ENCODE measurements at regions of chr15 and their contacts with region 1.

Region 1: DNA sequence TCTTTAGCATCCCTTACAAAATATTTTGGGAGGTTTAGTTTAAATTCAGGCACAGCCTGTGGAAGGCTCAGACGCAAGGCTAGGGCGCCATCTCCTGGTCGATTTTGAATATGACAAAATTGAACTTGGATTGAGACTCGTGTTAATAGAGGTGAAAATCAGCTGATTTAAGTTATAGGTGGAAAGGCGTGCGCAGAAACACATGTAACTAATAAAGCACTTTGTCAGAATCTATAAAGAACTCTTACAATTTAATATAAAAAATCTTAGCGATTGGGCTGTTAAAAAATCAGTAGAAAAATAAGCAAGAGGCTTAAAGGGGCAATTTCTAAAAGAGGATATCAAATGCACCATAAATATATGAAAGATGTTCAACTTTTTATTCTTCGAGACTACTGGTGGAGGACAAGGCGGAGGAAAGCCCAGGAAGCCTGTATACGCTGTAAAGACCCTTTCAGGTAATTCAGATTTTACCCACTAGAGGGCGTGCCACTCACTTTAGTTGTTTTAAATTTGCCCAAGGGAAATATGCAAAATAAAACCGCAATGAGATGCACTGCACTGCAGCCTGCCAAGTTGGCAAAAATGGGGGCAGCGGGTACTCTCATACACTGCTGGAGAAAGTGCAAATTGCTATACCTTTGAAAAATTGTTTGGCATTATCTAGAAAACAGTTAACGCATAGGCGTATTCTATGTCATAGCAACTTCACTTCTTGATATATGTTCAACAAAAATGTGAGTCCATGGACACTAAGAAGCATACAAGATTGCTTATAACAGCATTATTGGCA is 64.7 kb downstream of the SLC30A4 start:
- DNase-seq: peak; percentile 90
- H3K4me3 Mint-ChIP-seq: peak overlapping the region; percentile 79
- H3K27ac Mint-ChIP-seq: peak overlapping the region; percentile 79
- H3K4me1 Mint-ChIP-seq: peaks cover 42% of the 10 kb centered on the region
- H3K27me3 Mint-ChIP-seq: no peaks in the 10 kb centered on the region

Region 2: GRCh38 chr15:44873103-44873502 is 584.7 kb before region 1 on chr15:
- CTCF ChIA-PET with region 1: no interaction called
- intact Hi-C with region 1: no loop called
- DNase-seq: no peak
- H3K4me3 Mint-ChIP-seq: no peak overlapping the region
- H3K27ac Mint-ChIP-seq: no peak overlapping the region
- H3K4me1 Mint-ChIP-seq: no peaks in the 10 kb centered on the region
- H3K27me3 Mint-ChIP-seq: peaks cover 9% of the 10 kb centered on the region

Region 3: DNA sequence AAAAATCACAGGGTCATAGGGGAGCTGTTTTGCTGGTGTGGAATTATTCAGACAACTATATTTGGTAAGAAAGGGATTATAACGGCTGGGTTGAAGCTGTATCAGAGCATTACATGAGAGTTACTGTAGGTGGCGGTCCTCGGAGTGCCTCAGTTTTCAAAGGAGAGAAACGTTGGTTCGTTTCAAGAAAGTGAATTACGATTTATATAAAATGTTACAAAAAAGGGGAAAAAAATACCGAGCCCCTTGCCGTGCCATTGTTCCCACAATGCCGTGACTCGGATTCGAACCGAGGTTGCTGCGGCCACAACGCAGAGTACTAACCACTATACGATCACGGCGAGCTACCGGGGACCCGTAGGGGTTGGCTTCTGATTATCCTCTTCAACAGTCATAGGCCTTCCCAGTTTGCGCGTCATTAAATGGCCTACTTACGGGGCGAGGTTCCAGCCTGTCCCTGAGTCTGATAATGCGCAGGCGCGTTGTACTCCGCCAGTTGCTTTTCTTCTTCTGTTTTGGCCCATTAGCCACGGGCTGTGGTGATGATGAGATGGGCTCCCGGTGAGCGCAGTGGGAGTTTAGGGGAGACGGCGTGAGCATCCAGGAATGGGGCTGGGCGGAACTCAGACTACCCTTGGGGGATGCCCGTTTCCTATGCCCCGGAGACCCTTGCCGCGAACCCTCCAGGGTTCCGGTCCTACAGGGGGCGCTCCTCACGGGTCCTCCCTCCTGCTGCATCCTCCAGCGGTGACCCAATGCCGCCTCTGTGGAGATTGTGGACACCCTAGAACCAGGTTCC is 259.3 kb before region 1 on chr15:
- CTCF ChIA-PET with region 1: interaction called, 4 read pairs
- intact Hi-C with region 1: loop called (anchors 1 kb)
- DNase-seq: peak; percentile 97
- H3K4me3 Mint-ChIP-seq: no peak overlapping the region
- H3K27ac Mint-ChIP-seq: no peak overlapping the region
- H3K4me1 Mint-ChIP-seq: peaks cover 5% of the 10 kb centered on the region
- H3K27me3 Mint-ChIP-seq: peaks cover 2% of the 10 kb centered on the region

Region 4: DNA sequence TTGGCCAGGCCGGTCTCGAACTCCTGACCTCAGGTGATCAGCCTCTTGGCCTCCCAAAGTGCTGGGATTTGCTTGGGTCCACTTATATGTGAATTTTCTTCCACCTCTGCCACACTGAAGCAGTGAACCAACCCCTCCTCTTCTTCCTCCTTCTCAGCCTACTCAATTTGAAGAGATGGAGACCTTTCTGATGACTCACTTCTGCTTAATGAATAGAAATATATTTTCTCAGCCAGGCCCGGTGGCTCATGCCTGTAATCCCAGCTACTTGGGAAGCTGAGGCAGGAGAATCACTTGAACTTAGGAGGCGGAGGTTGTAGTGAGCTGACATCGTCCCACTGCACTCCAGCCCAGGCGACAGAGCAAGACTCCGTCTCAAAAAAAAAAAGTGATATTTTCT is 32.7 kb before region 1 on chr15:
- CTCF ChIA-PET with region 1: interaction called, 77 read pairs
- intact Hi-C with region 1: loop called (anchors 1 kb)
- DNase-seq: no peak
- H3K4me3 Mint-ChIP-seq: no peak overlapping the region
- H3K27ac Mint-ChIP-seq: no peak overlapping the region
- H3K4me1 Mint-ChIP-seq: no peaks in the 10 kb centered on the region
- H3K27me3 Mint-ChIP-seq: no peaks in the 10 kb centered on the region

Region 5: GRCh38 chr15:45522328-45523160 is 64.7 kb after region 1 on chr15 and contains the start of gene SLC30A4:
- CTCF ChIA-PET with region 1: interaction called, 4 read pairs
- intact Hi-C with region 1: loop called (anchors 1 kb)
- DNase-seq: peak; percentile 46
- H3K4me3 Mint-ChIP-seq: peak within 1 kb of the TSS; percentile 89
- H3K27ac Mint-ChIP-seq: no peak within 1 kb of the TSS
- H3K4me1 Mint-ChIP-seq: peaks cover 15% of the 10 kb centered on the region
- H3K27me3 Mint-ChIP-seq: no peaks in the 10 kb centered on the region
- total RNA-seq, gene SLC30A4: 1.0 to 1.2 TPM

Region 6: DNA sequence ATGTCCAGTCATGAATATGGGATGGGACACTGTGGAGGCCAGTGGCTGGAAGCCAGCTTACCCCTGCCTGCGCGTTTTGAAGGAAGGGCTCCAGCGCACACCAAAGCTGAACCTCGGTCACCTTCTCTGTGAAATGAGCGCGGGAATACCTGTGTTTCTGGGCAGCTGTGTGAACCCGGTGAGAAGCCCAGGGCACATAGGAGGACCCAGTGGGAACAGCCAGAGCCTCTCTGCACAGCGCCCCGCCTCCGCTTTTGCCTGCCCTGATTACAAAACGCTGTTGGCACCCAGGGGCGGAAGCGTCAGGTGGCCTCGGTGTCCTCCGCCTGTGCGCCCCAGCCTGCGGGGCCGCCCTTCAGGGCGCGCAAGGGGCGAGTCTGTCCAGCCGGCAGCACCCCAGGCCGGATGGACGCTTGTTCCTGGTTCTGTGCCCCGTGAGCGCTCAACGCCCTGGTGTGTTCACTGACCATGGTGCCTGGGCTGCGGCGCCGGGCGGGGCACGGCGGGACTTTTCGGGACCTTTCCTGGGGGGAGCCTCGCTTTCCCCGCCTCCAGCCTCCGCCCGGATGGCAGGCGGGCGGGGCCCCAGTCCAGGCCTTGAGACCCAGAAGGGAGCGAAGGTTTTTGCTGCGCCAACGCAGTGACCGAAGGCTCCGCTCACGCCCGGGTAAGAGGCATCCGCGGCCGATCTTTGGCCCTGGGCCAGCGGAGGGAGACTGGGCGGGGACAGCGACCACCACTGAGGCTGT is 176.8 kb after region 1 on chr15 and contains the start of gene SQOR:
- CTCF ChIA-PET with region 1: interaction called, 7 read pairs
- intact Hi-C with region 1: loop called (anchors 1 kb)
- DNase-seq: peak; percentile 76
- H3K4me3 Mint-ChIP-seq: peak within 1 kb of the TSS; percentile 99
- H3K27ac Mint-ChIP-seq: peak within 1 kb of the TSS; percentile 86
- H3K4me1 Mint-ChIP-seq: peaks cover 43% of the 10 kb centered on the region
- H3K27me3 Mint-ChIP-seq: no peaks in the 10 kb centered on the region
- total RNA-seq, gene SQOR: 54.3 to 56.4 TPM

Region 7: GRCh38 chr15:45759936-45760335 is 302.1 kb after region 1 on chr15:
- CTCF ChIA-PET with region 1: no interaction called
- intact Hi-C with region 1: no loop called
- DNase-seq: no peak
- H3K4me3 Mint-ChIP-seq: no peak overlapping the region
- H3K27ac Mint-ChIP-seq: no peak overlapping the region
- H3K4me1 Mint-ChIP-seq: no peaks in the 10 kb centered on the region
- H3K27me3 Mint-ChIP-seq: peaks cover 41% of the 10 kb centered on the region

Measured in activated naive CD4-positive, alpha-beta T cell treated with anti-CD3 and anti-CD28 coated beads for 36 hours (primary cell).